Mammary epithelial cell (primary cell): ENCODE measurements at regions of chr18 and their contacts with region 1.

Region 1: GRCh38 chr18:12947355-12948041 is at the start of gene SEH1L:
- DNase-seq: peak; percentile 94
- H3K4me3 ChIP-seq: peak within 1 kb of the TSS; percentile 90 to 99 (median 93)
- H3K27ac ChIP-seq: peak within 1 kb of the TSS; percentile 96
- H3K4me1 ChIP-seq: peaks cover 7% of the 10 kb centered on the region
- H3K27me3 ChIP-seq: no peaks in the 10 kb centered on the region
- CTCF ChIP-seq: no peak
- total RNA-seq, gene SEH1L: 41.0 to 67.8 TPM

Region 2: DNA sequence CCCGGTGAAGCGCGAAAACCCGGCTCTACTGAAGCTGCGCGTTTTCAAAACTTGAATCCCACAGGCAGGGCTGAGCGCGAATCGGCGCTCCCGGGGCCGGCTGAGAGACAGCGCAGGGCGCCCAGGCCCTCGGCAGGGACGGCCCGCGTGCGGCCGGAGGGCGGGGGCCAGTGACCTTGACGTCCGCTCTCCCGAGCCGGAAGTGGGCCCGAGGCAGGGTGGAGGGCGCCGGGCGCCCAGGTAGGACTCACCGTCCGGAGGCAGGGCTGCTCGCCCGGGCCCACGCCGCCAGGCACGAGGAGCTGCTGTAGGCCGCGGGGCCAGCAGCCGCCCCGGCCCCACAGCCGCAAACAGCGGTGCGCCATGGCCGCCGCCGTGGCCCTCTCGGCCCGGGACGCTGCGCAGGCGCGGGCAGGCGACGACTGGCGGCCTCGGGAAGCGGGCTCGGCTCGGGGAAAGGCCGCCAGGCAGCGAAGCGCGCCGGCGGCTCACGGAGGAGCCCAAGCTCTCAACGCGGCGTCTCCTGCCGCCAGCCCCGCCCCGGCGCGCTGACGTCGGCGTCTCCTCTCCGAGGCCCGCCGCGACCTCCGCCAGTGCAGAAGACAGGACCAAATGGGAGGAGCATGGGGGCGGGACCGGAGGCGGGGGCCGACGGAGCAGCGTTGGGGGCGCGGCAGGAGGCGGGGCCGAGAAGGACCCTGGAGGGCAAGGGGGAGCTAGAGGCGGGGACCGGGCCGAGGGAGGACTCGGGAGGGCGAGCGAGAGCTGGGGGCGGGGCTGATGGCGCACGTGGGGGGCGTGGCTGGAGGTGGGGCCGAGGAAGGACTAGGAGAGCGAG is 570.6 kb before region 1 on chr18 and contains the start of gene AFG3L2:
- CTCF ChIA-PET with region 1: no interaction called
- dilution Hi-C with region 1: no loop called
- in situ Hi-C with region 1: loop called (anchors 25 kb)
- intact Hi-C with region 1: loop called (anchors 5 kb)
- DNase-seq: peak; percentile 99
- H3K4me3 ChIP-seq: peak within 1 kb of the TSS; percentile 90 to 95 (median 90)
- H3K27ac ChIP-seq: peak within 1 kb of the TSS; percentile 93
- H3K4me1 ChIP-seq: peaks cover 11% of the 10 kb centered on the region
- H3K27me3 ChIP-seq: no peaks in the 10 kb centered on the region
- CTCF ChIP-seq: no peak
- total RNA-seq, gene AFG3L2: 50.5 to 55.8 TPM

Region 3: GRCh38 chr18:12883684-12884405 is 63.7 kb before region 1 on chr18 and contains the start of gene PTPN2:
- CTCF ChIA-PET with region 1: no interaction called
- dilution Hi-C with region 1: no loop called
- in situ Hi-C with region 1: no loop called
- intact Hi-C with region 1: loop called (anchors 5 kb)
- DNase-seq: peak; percentile 92
- H3K4me3 ChIP-seq: peak within 1 kb of the TSS; percentile 89 to 97 (median 93)
- H3K27ac ChIP-seq: peak within 1 kb of the TSS; percentile 97
- H3K4me1 ChIP-seq: peaks cover 13% of the 10 kb centered on the region
- H3K27me3 ChIP-seq: no peaks in the 10 kb centered on the region
- CTCF ChIP-seq: no peak
- total RNA-seq, gene PTPN2: 25.3 to 47.0 TPM

Region 4: GRCh38 chr18:12990967-12991838 is 43.7 kb after region 1 on chr18 and contains the start of gene CEP192:
- CTCF ChIA-PET with region 1: no interaction called
- dilution Hi-C with region 1: no loop called
- in situ Hi-C with region 1: no loop called
- intact Hi-C with region 1: loop called (anchors 2 kb)
- DNase-seq: peak; percentile 98
- H3K4me3 ChIP-seq: peak within 1 kb of the TSS; percentile 90 to 98 (median 93)
- H3K27ac ChIP-seq: peak within 1 kb of the TSS; percentile 88
- H3K4me1 ChIP-seq: peaks cover 20% of the 10 kb centered on the region
- H3K27me3 ChIP-seq: no peaks in the 10 kb centered on the region
- CTCF ChIP-seq: peak in 1 of 2 donors; percentile 16
- total RNA-seq, gene CEP192: 18.8 to 19.4 TPM